MCF 10A (cell line): ENCODE measurements at regions of chr7 and their contacts with region 1.

Region 1: GRCh38 chr7:144670218-144670617 is 165.6 kb downstream of the TPK1 start:
- DNase-seq: peak; percentile 33
- H3K4me3 Mint-ChIP-seq: no peak overlapping the region
- H3K27ac Mint-ChIP-seq: no peak overlapping the region
- H3K4me1 Mint-ChIP-seq: peaks cover 19% of the 10 kb centered on the region
- H3K27me3 Mint-ChIP-seq: no peaks in the 10 kb centered on the region
- CTCF ChIP-seq: peak; percentile 34

Region 2: DNA sequence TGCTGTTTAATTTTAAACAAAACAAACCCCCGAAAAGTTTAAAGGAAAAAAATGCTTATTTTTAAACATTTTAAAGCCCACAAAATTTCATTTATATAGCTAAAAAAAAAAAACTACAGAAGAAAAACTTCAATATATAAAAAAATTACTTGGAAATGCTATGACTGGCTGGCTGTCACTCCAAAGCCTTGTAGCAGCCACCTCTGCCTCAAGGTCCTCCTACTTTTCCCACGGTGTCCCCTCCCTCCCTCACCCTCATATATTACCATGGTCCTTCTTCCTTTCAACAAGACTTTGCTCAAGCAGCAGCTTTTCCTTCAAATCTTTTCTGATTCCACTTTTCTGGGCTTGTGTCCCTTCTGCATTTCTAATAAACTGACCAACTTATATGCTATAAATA is 43.6 kb after region 1 on chr7:
- CTCF ChIA-PET with region 1: interaction called, 14 read pairs
- POLR2A ChIA-PET with region 1: interaction called, 4 read pairs
- intact Hi-C with region 1: no loop called
- DNase-seq: no peak
- H3K4me3 Mint-ChIP-seq: no peak overlapping the region
- H3K27ac Mint-ChIP-seq: no peak overlapping the region
- H3K4me1 Mint-ChIP-seq: no peaks in the 10 kb centered on the region
- H3K27me3 Mint-ChIP-seq: no peaks in the 10 kb centered on the region
- CTCF ChIP-seq: no peak

Region 3: GRCh38 chr7:144786522-144786921 is 116.3 kb after region 1 on chr7:
- CTCF ChIA-PET with region 1: interaction called, 18 read pairs
- POLR2A ChIA-PET with region 1: no interaction called
- intact Hi-C with region 1: loop called (anchors 2 kb)
- DNase-seq: peak; percentile 23
- H3K4me3 Mint-ChIP-seq: no peak overlapping the region
- H3K27ac Mint-ChIP-seq: no peak overlapping the region
- H3K4me1 Mint-ChIP-seq: no peaks in the 10 kb centered on the region
- H3K27me3 Mint-ChIP-seq: no peaks in the 10 kb centered on the region
- CTCF ChIP-seq: no peak

Region 4: GRCh38 chr7:144835652-144836544 is 165.7 kb after region 1 on chr7 and contains the start of gene TPK1:
- CTCF ChIA-PET with region 1: interaction called, 12 read pairs
- POLR2A ChIA-PET with region 1: interaction called, 8 read pairs
- intact Hi-C with region 1: loop called (anchors 10 kb)
- DNase-seq: peak; percentile 91
- H3K4me3 Mint-ChIP-seq: peak within 1 kb of the TSS; percentile 98
- H3K27ac Mint-ChIP-seq: peak within 1 kb of the TSS; percentile 95
- H3K4me1 Mint-ChIP-seq: peaks cover under 1% of the 10 kb centered on the region
- H3K27me3 Mint-ChIP-seq: no peaks in the 10 kb centered on the region
- CTCF ChIP-seq: no peak
- total RNA-seq, gene TPK1: 8.8 TPM in 2 replicates

Region 5: GRCh38 chr7:144991041-144991440 is 320.8 kb after region 1 on chr7:
- CTCF ChIA-PET with region 1: no interaction called
- POLR2A ChIA-PET with region 1: no interaction called
- intact Hi-C with region 1: no loop called
- DNase-seq: no peak
- H3K4me3 Mint-ChIP-seq: no peak overlapping the region
- H3K27ac Mint-ChIP-seq: no peak overlapping the region
- H3K4me1 Mint-ChIP-seq: no peaks in the 10 kb centered on the region
- H3K27me3 Mint-ChIP-seq: no peaks in the 10 kb centered on the region
- CTCF ChIP-seq: no peak